Activated CD8-positive, alpha-beta memory T cell treated with anti-CD3 and anti-CD28 coated beads, Interleukin-2, amount 10 ng/mL, durations not matched to agents 7 days and 5 days (primary cell): ENCODE measurements at regions of chr10 and their contacts with region 1.

Region 1: DNA sequence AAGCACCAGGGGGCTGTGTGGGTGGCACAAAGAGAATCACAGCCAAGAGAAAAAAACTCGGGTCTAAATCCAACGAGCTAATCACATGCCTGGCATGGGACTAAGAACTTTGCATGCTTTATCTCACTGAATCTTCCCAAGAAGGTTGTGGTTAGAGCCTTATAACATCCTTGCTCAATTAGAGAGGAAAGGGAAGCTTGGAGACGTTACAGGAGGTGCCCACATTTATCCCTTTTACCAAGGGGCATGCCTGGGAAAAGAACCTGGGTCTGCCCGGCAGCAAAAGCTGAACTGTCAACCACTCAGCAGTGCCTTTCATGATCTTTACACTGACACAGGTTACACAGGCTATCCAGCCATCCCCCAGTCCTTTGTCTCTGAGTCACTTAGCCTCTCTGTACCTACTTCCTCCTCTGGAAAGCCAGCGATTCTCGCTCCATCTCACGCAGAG is 190.1 kb downstream of the PRPF18 start:
- DNase-seq: no peak
- ATAC-seq: no peak
- H3K4me3 Mint-ChIP-seq: no peak overlapping the region
- H3K27ac Mint-ChIP-seq: no peak overlapping the region
- H3K4me1 Mint-ChIP-seq: no peaks in the 10 kb centered on the region
- H3K27me3 Mint-ChIP-seq: peaks cover 26% of the 10 kb centered on the region

Region 2: GRCh38 chr10:13659897-13660550 is 116.9 kb before region 1 on chr10:
- CTCF ChIA-PET with region 1: interaction called, 24 read pairs
- DNase-seq: peak; percentile 75
- ATAC-seq: peak; percentile 60
- H3K4me3 Mint-ChIP-seq: no peak overlapping the region
- H3K27ac Mint-ChIP-seq: peak overlapping the region; percentile 24
- H3K4me1 Mint-ChIP-seq: peaks cover 26% of the 10 kb centered on the region
- H3K27me3 Mint-ChIP-seq: peaks cover 8% of the 10 kb centered on the region